Panc1 (cell line): ENCODE measurements at regions of chr1 and their contacts with region 1.

Region 1: GRCh38 chr1:40951943-40952743 is 27.4 kb upstream of the CTPS1 start:
- DNase-seq: peak; percentile 66
- ATAC-seq: peak; percentile 80
- H3K4me3 ChIP-seq: no peak overlapping the region
- H3K27ac ChIP-seq: peak overlapping the region; percentile 78
- H3K4me1 ChIP-seq: peaks cover 28% of the 10 kb centered on the region
- H3K27me3 ChIP-seq: no peaks in the 10 kb centered on the region
- CTCF ChIP-seq: peak; percentile 97

Region 2: GRCh38 chr1:40618108-40618507 is 334.0 kb before region 1 on chr1:
- CTCF ChIA-PET with region 1: no interaction called
- POLR2A ChIA-PET with region 1: no interaction called
- in situ Hi-C with region 1: no loop called
- intact Hi-C with region 1: no loop called
- DNase-seq: no peak
- ATAC-seq: no peak
- H3K4me3 ChIP-seq: no peak overlapping the region
- H3K27ac ChIP-seq: no peak overlapping the region
- H3K4me1 ChIP-seq: no peaks in the 10 kb centered on the region
- H3K27me3 ChIP-seq: no peaks in the 10 kb centered on the region; the same call in none of the 2 replicates
- CTCF ChIP-seq: no peak

Region 3: GRCh38 chr1:40774266-40774998 is 177.7 kb before region 1 on chr1:
- CTCF ChIA-PET with region 1: interaction called, 7 read pairs
- POLR2A ChIA-PET with region 1: no interaction called
- in situ Hi-C with region 1: no loop called
- intact Hi-C with region 1: loop called (anchors 5 kb)
- DNase-seq: peak; percentile 47
- ATAC-seq: peak; percentile 82
- H3K4me3 ChIP-seq: no peak overlapping the region
- H3K27ac ChIP-seq: no peak overlapping the region
- H3K4me1 ChIP-seq: no peaks in the 10 kb centered on the region
- H3K27me3 ChIP-seq: no peaks in the 10 kb centered on the region
- CTCF ChIP-seq: peak; percentile 93

Region 4: GRCh38 chr1:40849801-40850592 is 102.1 kb before region 1 on chr1:
- CTCF ChIA-PET with region 1: interaction called, 12 read pairs
- POLR2A ChIA-PET with region 1: no interaction called
- in situ Hi-C with region 1: no loop called
- intact Hi-C with region 1: loop called (anchors 1 kb)
- DNase-seq: no peak
- ATAC-seq: peak; percentile 89
- H3K4me3 ChIP-seq: no peak overlapping the region
- H3K27ac ChIP-seq: peak overlapping the region; percentile 49; the same call in 1 of the 2 replicates
- H3K4me1 ChIP-seq: no peaks in the 10 kb centered on the region
- H3K27me3 ChIP-seq: no peaks in the 10 kb centered on the region
- CTCF ChIP-seq: peak; percentile 93

Region 5: DNA sequence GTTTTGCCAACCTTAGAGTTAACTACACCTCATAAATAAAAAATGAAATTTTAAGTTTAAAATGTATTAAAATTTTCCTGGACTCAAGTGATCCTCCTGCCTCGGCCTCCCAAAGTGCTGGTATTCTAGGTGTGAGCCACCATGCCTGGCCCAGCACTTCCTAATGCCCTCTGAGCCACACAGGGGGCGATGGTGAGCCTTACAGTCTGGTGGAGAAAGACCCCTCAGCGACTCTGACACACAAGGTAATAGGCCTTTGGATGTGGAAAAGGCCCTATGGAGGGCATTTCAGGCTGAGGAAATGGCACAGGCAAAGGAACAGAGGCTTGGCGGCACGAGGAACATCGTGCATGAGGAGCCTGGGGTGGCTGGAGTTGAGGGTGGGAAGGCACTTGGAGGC is 96.6 kb before region 1 on chr1:
- CTCF ChIA-PET with region 1: interaction called, 25 read pairs
- POLR2A ChIA-PET with region 1: interaction called, 12 read pairs
- in situ Hi-C with region 1: no loop called
- intact Hi-C with region 1: no loop called
- DNase-seq: no peak
- ATAC-seq: no peak
- H3K4me3 ChIP-seq: no peak overlapping the region
- H3K27ac ChIP-seq: no peak overlapping the region
- H3K4me1 ChIP-seq: peaks cover 21% of the 10 kb centered on the region
- H3K27me3 ChIP-seq: no peaks in the 10 kb centered on the region
- CTCF ChIP-seq: peak; percentile 72

Region 6: GRCh38 chr1:40862008-40862863 is 89.9 kb before region 1 on chr1 and contains the start of gene CITED4:
- CTCF ChIA-PET with region 1: interaction called, 47 read pairs
- POLR2A ChIA-PET with region 1: interaction called, 17 read pairs
- in situ Hi-C with region 1: no loop called
- intact Hi-C with region 1: loop called (anchors 2 kb)
- DNase-seq: peak; percentile 89
- ATAC-seq: peak; percentile 86
- H3K4me3 ChIP-seq: peak within 1 kb of the TSS; percentile 72 to 82
- H3K27ac ChIP-seq: peak within 1 kb of the TSS; percentile 98
- H3K4me1 ChIP-seq: peaks cover 71% of the 10 kb centered on the region
- H3K27me3 ChIP-seq: no peaks in the 10 kb centered on the region
- CTCF ChIP-seq: peak; percentile 79
- total RNA-seq, gene CITED4: 145 TPM

Region 7: GRCh38 chr1:40868051-40868794 is 83.9 kb before region 1 on chr1:
- CTCF ChIA-PET with region 1: interaction called, 47 read pairs
- POLR2A ChIA-PET with region 1: interaction called, 17 read pairs
- in situ Hi-C with region 1: no loop called
- intact Hi-C with region 1: loop called (anchors 2 kb)
- DNase-seq: peak; percentile 48
- ATAC-seq: peak; percentile 58
- H3K4me3 ChIP-seq: no peak overlapping the region
- H3K27ac ChIP-seq: peak overlapping the region; percentile 96
- H3K4me1 ChIP-seq: peaks cover 62% of the 10 kb centered on the region
- H3K27me3 ChIP-seq: no peaks in the 10 kb centered on the region
- CTCF ChIP-seq: no peak

Region 8: DNA sequence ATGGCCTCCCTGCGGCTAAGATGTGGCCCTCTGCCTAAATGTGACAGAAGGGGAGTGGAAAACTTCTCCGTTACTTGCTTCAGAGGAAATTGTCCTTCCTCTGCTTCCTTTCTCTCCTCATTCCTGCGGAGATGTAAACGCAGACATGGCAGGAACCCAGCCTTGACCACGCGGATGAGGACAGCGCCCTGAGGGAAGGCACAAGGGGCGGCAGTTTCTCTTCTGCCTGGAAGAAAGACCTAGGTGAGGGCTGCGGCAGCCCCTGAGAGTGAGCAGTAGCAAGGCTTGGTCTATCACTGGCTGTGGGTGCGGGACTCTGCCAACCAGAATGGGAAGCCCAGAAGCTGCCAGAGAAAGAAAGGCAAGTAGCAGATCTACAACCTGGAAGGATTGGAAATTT is 13.4 kb after region 1 on chr1:
- CTCF ChIA-PET with region 1: no interaction called
- POLR2A ChIA-PET with region 1: interaction called, 10 read pairs
- in situ Hi-C with region 1: no loop called
- intact Hi-C with region 1: no loop called
- DNase-seq: no peak
- ATAC-seq: no peak
- H3K4me3 ChIP-seq: no peak overlapping the region
- H3K27ac ChIP-seq: peak overlapping the region; percentile 85
- H3K4me1 ChIP-seq: peaks cover 41% of the 10 kb centered on the region
- H3K27me3 ChIP-seq: no peaks in the 10 kb centered on the region
- CTCF ChIP-seq: no peak